ENCODE measurements at regions of chr9 and their contacts with region 1.

Region 1: GRCh38 chr9:34591248-34591916 is 1.9 kb upstream of the CNTFR start:
- DNase-seq: peak; percentile 93
- ATAC-seq: peak; percentile 64
- H3K4me3 Mint-ChIP-seq: peak overlapping the region; percentile 78
- H3K27ac Mint-ChIP-seq: no peak overlapping the region
- H3K4me1 Mint-ChIP-seq: peaks cover 32% of the 10 kb centered on the region
- H3K27me3 Mint-ChIP-seq: peaks cover 79% of the 10 kb centered on the region
- CTCF ChIP-seq: peak; percentile 89

Region 2: DNA sequence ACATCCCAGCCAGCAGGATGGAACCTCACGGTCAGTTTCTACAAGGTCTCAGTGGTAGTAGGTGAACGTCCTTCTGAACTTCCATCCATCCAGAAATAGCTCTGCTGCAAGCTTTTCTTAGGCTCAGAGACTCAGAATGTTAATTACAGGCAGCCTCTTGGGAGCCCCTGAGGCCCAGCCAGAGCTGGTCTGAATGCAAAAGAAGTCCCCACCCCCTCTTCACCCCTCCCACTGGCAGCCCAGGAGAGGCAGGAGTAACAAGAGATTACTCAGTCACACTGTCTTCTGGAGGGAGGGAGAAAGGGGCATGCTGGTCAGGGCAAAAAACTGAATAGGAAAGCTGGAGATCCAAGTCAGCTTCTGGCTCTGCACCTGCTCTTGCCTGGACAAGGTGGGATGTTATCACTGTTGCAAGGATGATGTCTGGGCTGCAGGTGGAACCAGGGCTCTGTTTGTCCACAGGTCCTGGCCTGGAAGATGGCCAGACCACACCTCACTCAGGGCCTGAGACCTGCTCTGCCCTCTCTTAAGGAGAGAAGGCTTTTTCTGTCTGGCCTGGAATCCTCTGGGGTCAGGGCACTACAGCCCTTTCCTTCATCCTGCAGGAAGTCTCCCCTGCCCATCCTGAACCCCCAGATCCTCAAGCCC is 77.7 kb before region 1 on chr9:
- CTCF ChIA-PET with region 1: interaction called, 23 read pairs
- POLR2A ChIA-PET with region 1: no interaction called
- DNase-seq: peak; percentile 72
- ATAC-seq: peak; percentile 78
- H3K4me3 Mint-ChIP-seq: peak overlapping the region; percentile 43
- H3K27ac Mint-ChIP-seq: peak overlapping the region; percentile 96
- H3K4me1 Mint-ChIP-seq: peaks cover 59% of the 10 kb centered on the region
- H3K27me3 Mint-ChIP-seq: no peaks in the 10 kb centered on the region
- CTCF ChIP-seq: no peak

Region 3: GRCh38 chr9:34554211-34555001 is 37.0 kb before region 1 on chr9:
- CTCF ChIA-PET with region 1: interaction called, 192 read pairs
- POLR2A ChIA-PET with region 1: interaction called, 4 read pairs
- DNase-seq: no peak
- ATAC-seq: peak; percentile 47
- H3K4me3 Mint-ChIP-seq: no peak overlapping the region
- H3K27ac Mint-ChIP-seq: no peak overlapping the region; the same call in 1 of the 2 replicates
- H3K4me1 Mint-ChIP-seq: peaks cover 36% of the 10 kb centered on the region
- H3K27me3 Mint-ChIP-seq: peaks cover 3% of the 10 kb centered on the region; the same call in 1 of the 2 replicates
- CTCF ChIP-seq: no peak

Region 4: GRCh38 chr9:34570376-34570775 is 21.0 kb before region 1 on chr9:
- CTCF ChIA-PET with region 1: interaction called, 109 read pairs
- POLR2A ChIA-PET with region 1: no interaction called
- DNase-seq: no peak
- ATAC-seq: no peak
- H3K4me3 Mint-ChIP-seq: no peak overlapping the region
- H3K27ac Mint-ChIP-seq: 0 out of 2 replicates have a peak overlapping the region, but pooled peaks have one; percentile 13
- H3K4me1 Mint-ChIP-seq: peaks cover 27% of the 10 kb centered on the region
- H3K27me3 Mint-ChIP-seq: peaks cover 2% of the 10 kb centered on the region; the same call in 1 of the 2 replicates
- CTCF ChIP-seq: no peak

Region 5: DNA sequence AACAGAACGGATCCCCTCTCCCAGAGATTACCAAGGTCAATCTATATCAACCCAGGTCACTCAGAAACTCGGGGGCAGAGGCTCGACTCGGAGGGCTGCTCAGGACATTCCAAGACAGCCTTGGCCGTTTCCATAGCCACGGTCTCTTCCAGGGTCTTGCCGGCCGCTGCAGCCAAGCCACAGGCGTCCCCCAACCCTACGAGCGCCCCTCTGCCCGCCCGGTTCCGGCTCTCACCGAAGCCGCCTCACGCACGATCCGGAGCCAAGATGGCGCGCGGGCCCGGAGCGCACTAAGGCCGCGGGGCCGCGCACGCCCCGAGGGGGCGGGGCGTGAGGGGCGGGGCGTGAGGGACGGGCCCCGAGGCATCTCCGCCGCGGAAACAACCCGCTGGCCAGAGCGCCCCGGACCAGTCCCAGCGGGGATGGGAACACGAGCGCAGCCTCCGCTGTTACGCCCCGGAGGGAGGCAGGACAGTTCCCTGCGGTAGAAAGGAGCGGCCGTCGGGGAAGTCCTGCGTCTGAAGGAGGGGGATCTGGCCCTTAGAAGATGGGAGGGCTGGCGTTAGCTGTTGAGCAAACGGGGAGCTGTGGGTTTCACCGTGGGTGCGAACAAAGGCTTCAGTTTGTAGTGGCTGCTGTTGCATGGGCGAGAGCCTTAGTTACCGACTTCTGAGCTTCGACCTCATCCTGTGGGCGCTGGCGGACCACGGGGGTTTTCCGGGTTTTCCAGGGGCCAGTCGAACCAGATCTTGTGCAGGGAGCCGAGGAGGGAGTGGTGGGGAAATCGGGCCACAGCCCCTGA is 20.6 kb after region 1 on chr9 and contains the start of gene RPP25L:
- CTCF ChIA-PET with region 1: interaction called, 96 read pairs
- POLR2A ChIA-PET with region 1: no interaction called
- DNase-seq: peak; percentile 83
- ATAC-seq: peak; percentile 86
- H3K4me3 Mint-ChIP-seq: peak within 1 kb of the TSS; percentile 82
- H3K27ac Mint-ChIP-seq: peak within 1 kb of the TSS; percentile 82
- H3K4me1 Mint-ChIP-seq: peaks cover 20% of the 10 kb centered on the region
- H3K27me3 Mint-ChIP-seq: peaks cover 11% of the 10 kb centered on the region
- CTCF ChIP-seq: no peak
- total RNA-seq, gene RPP25L: 24.5 to 35.9 TPM (median 31.4 TPM) in 3 replicates

Region 6: DNA sequence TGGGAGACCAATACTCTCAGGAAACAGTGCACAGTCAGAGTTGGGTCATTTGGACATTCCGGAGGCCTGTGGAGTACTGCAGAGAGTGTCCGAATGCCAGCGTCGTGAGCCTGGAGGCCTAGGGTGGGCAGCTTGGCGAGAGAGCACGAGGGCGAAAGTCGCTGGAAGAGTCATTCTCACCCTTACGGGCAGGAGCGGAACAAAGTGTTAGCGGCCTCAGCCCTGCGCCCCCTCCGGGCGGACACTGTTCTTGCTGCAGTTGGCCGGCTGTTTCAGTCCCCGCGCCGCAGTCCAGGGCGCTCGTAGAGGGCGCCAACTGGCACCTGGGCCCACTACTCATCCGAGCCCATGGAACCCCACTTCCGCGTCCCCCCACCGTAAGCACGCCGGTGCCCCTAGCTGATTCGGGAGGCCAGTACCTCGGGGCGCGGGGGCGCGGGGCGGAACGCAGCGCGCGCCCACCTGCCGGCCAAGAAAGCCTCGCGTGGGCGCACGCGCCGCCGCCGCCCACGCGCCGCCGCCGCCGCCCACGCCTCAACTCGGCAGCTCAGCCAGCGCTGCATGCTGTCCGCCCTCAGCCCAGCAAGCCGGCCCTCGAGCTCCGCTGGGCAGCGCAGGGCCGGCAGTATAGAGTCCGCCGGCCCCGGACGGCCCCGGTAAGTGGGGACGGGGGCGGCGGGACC is 218.3 kb after region 1 on chr9:
- CTCF ChIA-PET with region 1: no interaction called
- POLR2A ChIA-PET with region 1: no interaction called
- DNase-seq: peak; percentile 83
- ATAC-seq: peak; percentile 100
- H3K4me3 Mint-ChIP-seq: peak overlapping the region; percentile 58
- H3K27ac Mint-ChIP-seq: no peak overlapping the region
- H3K4me1 Mint-ChIP-seq: peaks cover 3% of the 10 kb centered on the region; the same call in 1 of the 2 replicates
- H3K27me3 Mint-ChIP-seq: peaks cover 81% of the 10 kb centered on the region
- CTCF ChIP-seq: no peak

Measured in WTC11 (cell line).